ENCODE measurements at regions of chr19 and their contacts with region 1.

Region 1: GRCh38 chr19:5953680-5954213 is 24.2 kb downstream of the RANBP3 start:
- DNase-seq: no peak
- ATAC-seq: no peak
- H3K4me3 ChIP-seq: peak overlapping the region in 1 of 3 experiments; percentile 38; a peak in 1 of 6 replicates
- H3K27ac ChIP-seq: peak overlapping the region; percentile 58
- H3K4me1 ChIP-seq: peaks cover 66% of the 10 kb centered on the region
- H3K27me3 ChIP-seq: no peaks in the 10 kb centered on the region
- CTCF ChIP-seq: no peak
- EP300 ChIP-seq: no peak
- POLR2A ChIP-seq: no peak
- RAD21 ChIP-seq: no peak

Region 2: GRCh38 chr19:5913739-5914357 is 39.9 kb before region 1 on chr19 and contains the start of gene CAPS:
- CTCF ChIA-PET with region 1: no interaction called
- POLR2A ChIA-PET with region 1: no interaction called
- in situ Hi-C with region 1: loop called (anchors 5 kb)
- intact Hi-C with region 1: loop called (anchors 2 kb)
- DNase-seq: peak; percentile 39
- ATAC-seq: peak; percentile 7
- H3K4me3 ChIP-seq: no peak within 1 kb of the TSS
- H3K27ac ChIP-seq: peak within 1 kb of the TSS; percentile 32
- H3K4me1 ChIP-seq: peaks cover 68% of the 10 kb centered on the region
- H3K27me3 ChIP-seq: no peaks in the 10 kb centered on the region
- CTCF ChIP-seq: no peak
- EP300 ChIP-seq: no peak
- POLR2A ChIP-seq: no peak
- RAD21 ChIP-seq: no peak; the same call in 1 of the 2 replicates
- total RNA-seq, gene CAPS: 1.7 and 3.1 TPM in 2 replicates

Region 3: GRCh38 chr19:5943623-5944022 is 10.1 kb before region 1 on chr19:
- CTCF ChIA-PET with region 1: no interaction called
- POLR2A ChIA-PET with region 1: no interaction called
- in situ Hi-C with region 1: no loop called
- intact Hi-C with region 1: no loop called
- DNase-seq: no peak
- ATAC-seq: no peak
- H3K4me3 ChIP-seq: no peak overlapping the region
- H3K27ac ChIP-seq: no peak overlapping the region
- H3K4me1 ChIP-seq: peaks cover 21% of the 10 kb centered on the region
- H3K27me3 ChIP-seq: no peaks in the 10 kb centered on the region
- CTCF ChIP-seq: no peak
- EP300 ChIP-seq: no peak
- POLR2A ChIP-seq: no peak
- RAD21 ChIP-seq: no peak

Measured in HepG2 (cell line).